ENCODE measurements at regions of chrX and their contacts with region 1.

Region 1: DNA sequence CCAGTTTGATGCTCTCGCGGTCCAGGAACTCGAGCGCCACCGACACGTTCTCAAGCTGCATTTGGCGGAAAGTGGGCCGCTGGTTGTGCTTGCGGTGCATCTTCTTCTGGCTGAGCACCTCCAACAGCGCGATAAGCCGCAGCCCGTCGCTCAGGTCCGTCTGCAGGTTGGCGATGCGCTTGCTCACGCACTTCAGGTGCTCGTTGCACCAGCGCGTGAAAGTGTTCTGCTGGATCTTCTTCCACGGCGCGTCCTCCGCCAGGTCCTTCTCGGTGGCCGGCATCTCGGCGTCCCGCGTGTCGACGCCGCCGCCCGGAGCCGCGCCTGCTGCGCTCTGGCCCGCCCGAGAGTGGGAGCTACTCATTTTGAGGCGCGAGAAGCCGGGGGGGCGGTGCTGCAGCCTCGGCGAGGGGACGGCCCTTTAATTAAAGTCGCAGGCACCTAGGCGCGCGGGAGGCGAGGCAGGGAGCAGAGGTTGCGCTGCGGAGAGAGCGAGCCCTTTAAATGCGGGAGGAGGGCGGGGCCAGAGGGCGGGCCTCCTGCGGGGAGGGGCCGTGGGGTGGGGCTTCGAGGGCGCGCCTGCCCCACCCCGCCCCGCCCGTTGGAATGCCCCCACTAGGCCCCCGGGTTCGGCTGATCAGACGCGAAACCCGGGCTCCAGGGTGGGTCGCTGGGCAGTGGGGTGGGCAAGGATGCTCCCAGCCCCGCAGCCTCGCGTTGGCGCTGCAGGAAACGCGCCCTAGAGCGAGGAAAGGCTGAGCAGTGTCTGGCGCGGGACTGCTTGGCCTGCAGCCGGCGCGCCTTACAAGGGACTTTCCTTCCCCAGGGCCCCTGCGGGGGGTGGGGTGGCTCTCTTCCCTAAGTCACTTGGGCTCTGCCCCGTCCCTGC is 3.3 kb downstream of the FLNA start:
- DNase-seq: peak; percentile 95
- H3K4me3 Mint-ChIP-seq: peak overlapping the region; percentile 76
- H3K27ac Mint-ChIP-seq: peak overlapping the region; percentile 56
- H3K4me1 Mint-ChIP-seq: peaks cover 22% of the 10 kb centered on the region
- H3K27me3 Mint-ChIP-seq: no peaks in the 10 kb centered on the region

Region 2: DNA sequence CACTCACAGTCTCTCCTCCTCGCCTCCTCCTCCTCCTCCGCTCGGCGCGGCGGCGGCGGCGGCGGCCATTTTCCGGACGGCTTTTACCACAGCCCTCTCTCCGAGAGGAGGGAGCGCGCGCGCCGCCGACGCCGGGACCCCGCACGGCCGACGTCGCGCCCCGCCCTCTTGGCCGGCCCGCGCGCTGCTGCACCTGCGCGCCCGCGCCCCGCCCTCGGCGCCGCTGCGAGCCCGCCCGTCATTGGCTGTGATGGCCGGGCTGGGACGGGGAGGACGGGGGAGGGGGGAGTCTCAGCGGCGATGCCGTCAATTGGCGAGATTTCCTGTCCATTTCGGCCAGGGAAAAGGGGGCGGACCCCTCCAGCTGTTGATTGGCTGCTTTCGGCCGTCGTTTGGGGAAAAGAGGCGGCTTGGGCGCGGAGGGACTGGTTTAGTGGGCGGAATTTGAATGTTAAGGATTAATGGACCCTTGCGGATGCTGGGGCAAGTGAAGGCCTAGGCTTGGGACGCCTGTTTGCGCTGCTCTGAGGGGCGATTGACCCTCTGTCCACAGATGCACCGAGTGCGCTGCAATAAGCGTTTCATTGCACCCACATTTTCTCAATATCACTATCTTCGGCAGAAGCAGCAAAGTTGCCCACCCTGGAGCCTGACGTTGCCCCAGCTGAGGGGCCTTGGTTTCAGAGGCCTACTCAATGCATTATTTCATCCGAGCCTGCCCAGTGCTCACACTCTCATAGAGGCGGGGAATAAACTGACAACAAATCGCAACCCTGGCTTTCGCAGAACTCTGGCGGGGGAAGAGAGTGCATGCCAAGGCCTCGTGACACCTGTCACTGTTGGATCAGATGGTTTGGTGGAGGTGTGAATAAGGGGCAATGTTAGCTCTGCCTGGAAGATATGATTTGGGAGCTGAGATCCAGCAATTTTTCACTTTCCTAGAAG is 273.3 kb before region 1 on chrX and contains the start of gene MECP2:
- CTCF ChIA-PET with region 1: no interaction called
- intact Hi-C with region 1: loop called (anchors 5 kb)
- DNase-seq: peak; percentile 94
- H3K4me3 Mint-ChIP-seq: peak within 1 kb of the TSS; percentile 89
- H3K27ac Mint-ChIP-seq: peak within 1 kb of the TSS; percentile 94
- H3K4me1 Mint-ChIP-seq: peaks cover 44% of the 10 kb centered on the region
- H3K27me3 Mint-ChIP-seq: no peaks in the 10 kb centered on the region
- total RNA-seq, gene MECP2: 47.1 to 50.2 TPM

Region 3: GRCh38 chrX:154384284-154384892 is 13.3 kb after region 1 on chrX:
- CTCF ChIA-PET with region 1: interaction called, 11 read pairs
- intact Hi-C with region 1: no loop called
- DNase-seq: no peak
- H3K4me3 Mint-ChIP-seq: no peak overlapping the region
- H3K27ac Mint-ChIP-seq: no peak overlapping the region
- H3K4me1 Mint-ChIP-seq: peaks cover 9% of the 10 kb centered on the region
- H3K27me3 Mint-ChIP-seq: no peaks in the 10 kb centered on the region

Region 4: DNA sequence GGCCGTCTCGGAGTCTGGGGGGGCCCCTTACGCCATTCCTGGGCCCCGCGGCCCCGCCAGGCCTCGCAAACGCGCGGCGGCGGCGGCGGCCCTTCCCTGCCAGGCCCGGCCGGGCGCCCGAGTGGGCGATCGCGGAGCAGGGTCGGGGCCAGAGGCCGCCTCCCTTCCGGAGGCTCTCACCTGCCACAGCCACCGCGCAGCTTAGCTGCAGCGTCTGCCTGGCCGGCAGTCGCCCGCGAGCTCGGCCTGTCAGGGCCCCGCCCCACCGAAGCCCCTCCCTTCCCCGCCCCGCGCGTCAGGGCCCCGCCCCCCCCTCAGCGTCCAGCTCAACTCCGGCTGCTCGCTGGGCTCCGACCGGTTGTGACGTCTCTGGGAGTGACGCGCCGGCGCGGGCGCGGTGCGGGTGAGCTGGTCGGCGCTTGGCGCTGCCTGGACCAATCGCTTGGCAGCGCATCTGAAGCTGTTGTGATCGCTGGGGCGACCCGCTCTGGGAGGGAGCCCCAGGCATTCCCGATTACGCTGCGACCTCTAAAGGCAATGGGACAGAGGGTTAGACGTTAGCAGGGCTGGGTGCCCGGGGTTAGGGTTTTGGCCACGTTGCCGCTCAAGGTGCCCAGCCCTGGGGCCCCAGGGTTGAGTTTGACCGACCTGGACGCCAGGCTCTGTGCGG is 119.4 kb after region 1 on chrX and contains the start of gene SLC10A3:
- CTCF ChIA-PET with region 1: interaction called, 6 read pairs
- intact Hi-C with region 1: loop called (anchors 1 kb)
- DNase-seq: peak; percentile 92
- H3K4me3 Mint-ChIP-seq: peak within 1 kb of the TSS; percentile 86
- H3K27ac Mint-ChIP-seq: peak within 1 kb of the TSS; percentile 88
- H3K4me1 Mint-ChIP-seq: peaks cover 20% of the 10 kb centered on the region
- H3K27me3 Mint-ChIP-seq: no peaks in the 10 kb centered on the region
- total RNA-seq, gene SLC10A3: 6.7 to 6.9 TPM

Region 5: GRCh38 chrX:154829926-154830442 is 458.9 kb after region 1 on chrX:
- CTCF ChIA-PET with region 1: no interaction called
- intact Hi-C with region 1: no loop called
- DNase-seq: no peak
- H3K4me3 Mint-ChIP-seq: no peak overlapping the region
- H3K27ac Mint-ChIP-seq: no peak overlapping the region
- H3K4me1 Mint-ChIP-seq: peaks cover 14% of the 10 kb centered on the region
- H3K27me3 Mint-ChIP-seq: no peaks in the 10 kb centered on the region

Measured in activated naive CD4-positive, alpha-beta T cell treated with anti-CD3 and anti-CD28 coated beads for 36 hours (primary cell).